ENCODE measurements at regions of chr20 and their contacts with region 1.

Region 1: DNA sequence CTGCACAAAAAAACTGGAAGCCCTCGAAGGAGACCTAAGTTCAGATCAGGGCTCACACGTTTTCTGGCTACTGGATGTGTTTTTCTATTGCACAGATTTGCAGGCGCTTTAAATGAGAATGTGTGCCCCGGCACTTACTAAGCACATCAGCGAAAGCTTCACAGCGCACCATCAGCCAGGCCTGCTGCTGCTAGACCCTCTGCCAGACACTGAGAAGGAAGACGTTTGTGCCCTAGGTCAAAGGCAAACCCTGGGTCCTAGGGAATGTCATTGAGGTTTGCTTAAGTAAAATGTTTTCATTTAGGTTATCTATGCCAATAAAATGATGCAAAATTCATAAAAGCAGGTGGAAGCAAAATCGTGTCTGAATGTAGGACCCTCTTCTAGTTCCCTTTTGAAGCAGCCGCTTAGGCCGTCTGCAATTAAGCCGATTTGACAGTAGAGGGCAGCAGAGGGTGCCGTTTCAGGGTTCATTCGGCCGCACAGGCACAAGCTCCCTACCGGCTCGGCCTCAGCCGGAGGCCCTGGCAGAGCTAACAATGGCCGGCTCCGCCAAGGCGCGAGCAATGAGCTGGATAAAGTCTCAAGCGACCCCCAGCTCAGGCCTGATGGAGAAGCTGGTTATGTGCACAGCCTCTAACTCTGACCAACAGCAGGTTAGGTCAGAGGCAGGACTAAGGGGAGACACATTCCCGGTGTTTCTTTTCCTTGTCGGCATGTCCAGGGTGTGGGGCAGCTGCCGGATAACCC is 107.2 kb upstream of the FOXA2 start:
- DNase-seq: peak; percentile 74
- H3K4me3 Mint-ChIP-seq: no peak overlapping the region
- H3K27ac Mint-ChIP-seq: no peak overlapping the region
- H3K4me1 Mint-ChIP-seq: peaks cover 13% of the 10 kb centered on the region
- H3K27me3 Mint-ChIP-seq: no peaks in the 10 kb centered on the region
- CTCF ChIP-seq: peak; percentile 94

Region 2: GRCh38 chr20:22303523-22303922 is 388.0 kb before region 1 on chr20:
- CTCF ChIA-PET with region 1: no interaction called
- POLR2A ChIA-PET with region 1: no interaction called
- intact Hi-C with region 1: no loop called
- DNase-seq: peak; percentile 27
- H3K4me3 Mint-ChIP-seq: no peak overlapping the region
- H3K27ac Mint-ChIP-seq: no peak overlapping the region
- H3K4me1 Mint-ChIP-seq: peaks cover 21% of the 10 kb centered on the region
- H3K27me3 Mint-ChIP-seq: no peaks in the 10 kb centered on the region
- CTCF ChIP-seq: no peak

Region 3: GRCh38 chr20:22339091-22339881 is 352.3 kb before region 1 on chr20:
- CTCF ChIA-PET with region 1: interaction called, 549 read pairs
- POLR2A ChIA-PET with region 1: interaction called, 31 read pairs
- intact Hi-C with region 1: no loop called
- DNase-seq: peak; percentile 84
- H3K4me3 Mint-ChIP-seq: no peak overlapping the region
- H3K27ac Mint-ChIP-seq: no peak overlapping the region
- H3K4me1 Mint-ChIP-seq: peaks cover 36% of the 10 kb centered on the region
- H3K27me3 Mint-ChIP-seq: no peaks in the 10 kb centered on the region
- CTCF ChIP-seq: peak; percentile 76

Region 4: DNA sequence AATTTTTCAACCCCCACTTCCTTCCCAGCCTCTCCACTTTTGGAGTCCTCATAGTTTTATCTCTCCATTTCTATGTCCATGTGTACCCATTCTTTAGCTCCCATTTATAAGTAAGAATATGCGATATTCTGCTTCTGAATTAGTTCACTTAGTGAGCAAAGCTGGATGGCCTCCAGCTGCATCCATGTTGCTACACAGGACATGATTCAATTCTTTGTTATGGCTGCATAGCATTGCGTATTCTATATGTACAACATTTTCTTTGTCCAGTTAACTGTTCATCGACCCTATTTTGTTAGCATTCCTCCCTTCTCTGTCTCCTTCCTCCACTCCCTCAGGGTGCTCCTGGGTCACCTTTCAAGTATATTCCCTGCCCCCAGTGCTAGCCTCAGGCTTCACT is 133.5 kb after region 1 on chr20:
- CTCF ChIA-PET with region 1: interaction called, 11 read pairs
- POLR2A ChIA-PET with region 1: no interaction called
- intact Hi-C with region 1: no loop called
- DNase-seq: peak; percentile 77
- H3K4me3 Mint-ChIP-seq: no peak overlapping the region
- H3K27ac Mint-ChIP-seq: peak overlapping the region; percentile 68
- H3K4me1 Mint-ChIP-seq: peaks cover 28% of the 10 kb centered on the region
- H3K27me3 Mint-ChIP-seq: no peaks in the 10 kb centered on the region
- CTCF ChIP-seq: no peak

Region 5: GRCh38 chr20:23061734-23062561 is 370.4 kb after region 1 on chr20:
- CTCF ChIA-PET with region 1: interaction called, 11 read pairs
- POLR2A ChIA-PET with region 1: no interaction called
- intact Hi-C with region 1: no loop called
- DNase-seq: peak; percentile 50
- H3K4me3 Mint-ChIP-seq: no peak overlapping the region
- H3K27ac Mint-ChIP-seq: no peak overlapping the region
- H3K4me1 Mint-ChIP-seq: no peaks in the 10 kb centered on the region
- H3K27me3 Mint-ChIP-seq: no peaks in the 10 kb centered on the region
- CTCF ChIP-seq: no peak

Region 6: GRCh38 chr20:23187751-23188150 is 496.2 kb after region 1 on chr20:
- CTCF ChIA-PET with region 1: interaction called, 16 read pairs
- POLR2A ChIA-PET with region 1: interaction called, 3 read pairs
- intact Hi-C with region 1: no loop called
- DNase-seq: peak; percentile 64
- H3K4me3 Mint-ChIP-seq: no peak overlapping the region
- H3K27ac Mint-ChIP-seq: no peak overlapping the region
- H3K4me1 Mint-ChIP-seq: peaks cover 6% of the 10 kb centered on the region
- H3K27me3 Mint-ChIP-seq: no peaks in the 10 kb centered on the region
- CTCF ChIP-seq: no peak

Region 7: DNA sequence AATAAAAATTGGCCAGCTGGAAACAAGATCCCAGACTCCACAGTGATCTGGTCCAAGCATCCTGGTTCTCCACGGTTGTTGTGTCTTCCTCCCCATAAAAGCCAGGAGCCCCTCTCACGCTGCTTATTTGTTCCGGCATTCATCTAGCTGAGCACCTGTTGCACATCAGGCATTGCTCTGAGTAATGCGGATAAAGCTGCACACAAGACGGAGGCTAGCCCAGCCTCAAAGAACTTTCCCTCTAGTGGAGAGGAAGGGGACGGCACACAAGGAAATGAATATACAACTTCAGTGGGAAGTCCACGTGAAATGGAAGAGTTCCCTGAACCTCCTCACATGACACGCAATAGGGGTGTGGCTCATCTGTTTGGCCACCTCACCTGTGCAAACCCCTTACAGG is 628.8 kb after region 1 on chr20:
- CTCF ChIA-PET with region 1: interaction called, 22 read pairs
- POLR2A ChIA-PET with region 1: no interaction called
- intact Hi-C with region 1: no loop called
- DNase-seq: peak; percentile 36
- H3K4me3 Mint-ChIP-seq: no peak overlapping the region
- H3K27ac Mint-ChIP-seq: no peak overlapping the region
- H3K4me1 Mint-ChIP-seq: no peaks in the 10 kb centered on the region
- H3K27me3 Mint-ChIP-seq: no peaks in the 10 kb centered on the region
- CTCF ChIP-seq: no peak

Region 8: DNA sequence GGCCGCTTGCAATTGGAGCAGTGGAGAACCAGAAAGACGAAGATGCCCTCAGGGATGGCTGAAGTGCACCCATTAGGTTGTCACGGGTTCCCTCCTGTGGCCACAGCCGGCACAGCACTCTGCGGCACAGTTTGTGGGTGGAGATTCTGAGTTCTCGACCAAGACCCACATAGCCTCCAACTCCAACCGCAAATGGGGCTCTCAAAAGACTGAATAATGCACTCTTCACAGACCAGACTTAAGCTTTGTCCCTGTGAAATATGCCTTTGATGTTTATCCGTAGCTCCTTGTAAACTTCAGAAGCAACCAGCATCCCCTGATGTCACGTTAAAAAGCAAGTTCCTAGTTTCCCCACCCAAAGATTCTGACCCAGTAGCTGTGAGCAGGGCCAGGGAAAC is 915.1 kb after region 1 on chr20:
- CTCF ChIA-PET with region 1: interaction called, 9 read pairs
- POLR2A ChIA-PET with region 1: no interaction called
- intact Hi-C with region 1: loop called (anchors 1 kb)
- DNase-seq: peak; percentile 86
- H3K4me3 Mint-ChIP-seq: no peak overlapping the region
- H3K27ac Mint-ChIP-seq: peak overlapping the region; percentile 58
- H3K4me1 Mint-ChIP-seq: no peaks in the 10 kb centered on the region
- H3K27me3 Mint-ChIP-seq: no peaks in the 10 kb centered on the region
- CTCF ChIP-seq: peak; percentile 90